HCT116 (cell line): ENCODE measurements at regions of chr5 and their contacts with region 1.

Region 1: DNA sequence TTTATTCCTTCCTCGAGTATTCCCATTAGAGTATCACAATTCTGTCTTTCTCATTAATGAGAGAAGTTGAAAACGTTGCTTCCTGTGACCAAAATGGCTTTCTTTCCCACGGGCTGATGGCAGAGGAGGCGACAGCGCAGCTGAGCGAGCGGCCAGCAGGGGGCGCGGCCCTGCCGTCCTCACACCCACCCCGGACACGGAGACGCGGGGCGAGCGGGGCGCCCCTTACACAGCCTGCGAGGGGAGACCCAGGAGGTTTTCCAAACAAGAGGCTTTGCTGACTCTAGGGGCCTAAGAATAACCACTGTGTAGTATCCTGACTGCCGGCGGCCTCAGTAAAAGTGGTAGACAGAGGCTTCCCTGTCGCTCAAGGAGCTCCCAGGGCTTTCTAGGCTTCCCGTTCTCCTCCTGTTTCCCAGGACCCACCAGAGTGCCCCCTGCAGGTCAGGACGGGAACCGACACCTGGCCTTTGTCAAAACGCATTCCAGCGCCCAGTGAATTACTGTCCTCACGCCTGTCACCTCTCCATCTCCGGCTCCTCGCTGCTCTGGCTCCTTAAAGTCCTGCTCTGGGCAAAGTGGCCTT is 27.3 kb upstream of the FGF1 start:
- DNase-seq: peak; percentile 80
- ATAC-seq: peak; percentile 83
- H3K4me3 ChIP-seq: peak overlapping the region; percentile 46 to 57
- H3K27ac ChIP-seq: peak overlapping the region; percentile 44
- H3K4me1 ChIP-seq: peaks cover 2 to 21% of the 10 kb centered on the region in 2 experiments; a peak in 3 of 4 replicates
- H3K27me3 ChIP-seq: no peaks in the 10 kb centered on the region
- CTCF ChIP-seq: peak; percentile 84 to 99 (median 96)
- POLR2A ChIP-seq: no peak
- RAD21 ChIP-seq: peak; percentile 73

Region 2: GRCh38 chr5:142611154-142611553 is 102.1 kb before region 1 on chr5:
- CTCF ChIA-PET with region 1: interaction called, 6 read pairs
- POLR2A ChIA-PET with region 1: no interaction called
- RAD21 ChIA-PET with region 1: no interaction called
- intact Hi-C with region 1: loop called (anchors 1 kb)
- DNase-seq: peak; percentile 60
- ATAC-seq: peak; percentile 97
- H3K4me3 ChIP-seq: no peak overlapping the region
- H3K27ac ChIP-seq: no peak overlapping the region
- H3K4me1 ChIP-seq: no peaks in the 10 kb centered on the region
- H3K27me3 ChIP-seq: no peaks in the 10 kb centered on the region
- CTCF ChIP-seq: peak; percentile 65 to 91 (median 85)
- POLR2A ChIP-seq: no peak
- RAD21 ChIP-seq: peak; percentile 95

Region 3: GRCh38 chr5:142655339-142656267 is 57.6 kb before region 1 on chr5:
- CTCF ChIA-PET with region 1: interaction called, 35 read pairs
- POLR2A ChIA-PET with region 1: no interaction called
- RAD21 ChIA-PET with region 1: interaction called, 4 to 5 read pairs
- intact Hi-C with region 1: no loop called
- DNase-seq: peak; percentile 33
- ATAC-seq: peak; percentile 98
- H3K4me3 ChIP-seq: no peak overlapping the region
- H3K27ac ChIP-seq: no peak overlapping the region
- H3K4me1 ChIP-seq: peaks cover 0 to 3% of the 10 kb centered on the region in 2 experiments; a peak in 1 of 4 replicates
- H3K27me3 ChIP-seq: no peaks in the 10 kb centered on the region
- CTCF ChIP-seq: peak; percentile 96 to 99 (median 96)
- POLR2A ChIP-seq: no peak
- RAD21 ChIP-seq: peak; percentile 99

Region 4: DNA sequence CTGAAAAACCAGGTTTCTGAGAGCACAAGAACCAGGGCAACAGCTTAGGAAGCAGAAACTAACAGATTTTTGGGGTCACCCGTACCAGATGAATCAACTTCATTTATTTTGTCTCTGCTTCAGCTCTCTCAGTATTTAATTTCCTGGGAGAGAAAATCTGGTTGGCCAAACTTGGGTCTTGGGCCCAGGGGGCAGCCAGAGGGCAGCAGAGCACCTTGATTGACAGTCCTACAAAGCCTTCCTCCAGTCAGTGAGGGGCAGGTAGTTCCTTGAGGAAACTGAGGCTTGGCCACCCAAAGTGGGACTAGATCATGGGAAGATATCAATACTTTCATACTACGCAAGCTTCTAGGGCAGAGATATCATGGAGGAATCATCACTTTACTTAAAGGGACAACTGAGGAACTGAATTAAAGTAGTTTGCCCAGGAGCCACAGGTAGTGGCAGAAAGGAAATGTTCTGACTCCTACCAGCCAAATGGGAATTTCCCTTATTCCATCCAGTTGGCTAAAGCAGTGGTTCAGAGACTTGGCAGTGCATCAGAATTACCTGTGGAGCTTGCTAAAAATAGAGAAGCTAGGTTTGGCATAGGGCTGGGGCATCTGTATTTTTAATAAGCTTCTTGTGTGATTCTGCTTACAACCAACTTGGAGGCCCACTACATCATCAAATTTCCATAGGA is 35.5 kb after region 1 on chr5:
- CTCF ChIA-PET with region 1: interaction called, 15 read pairs
- POLR2A ChIA-PET with region 1: no interaction called
- RAD21 ChIA-PET with region 1: interaction called in 1 of 2 experiments, 3 read pairs
- intact Hi-C with region 1: no loop called
- DNase-seq: no peak
- ATAC-seq: peak; percentile 92
- H3K4me3 ChIP-seq: no peak overlapping the region
- H3K27ac ChIP-seq: no peak overlapping the region
- H3K4me1 ChIP-seq: peaks cover 3 to 12% of the 10 kb centered on the region in 2 experiments; a peak in 3 of 4 replicates
- H3K27me3 ChIP-seq: no peaks in the 10 kb centered on the region
- CTCF ChIP-seq: peak; percentile 70 to 95 (median 85)
- POLR2A ChIP-seq: no peak
- RAD21 ChIP-seq: peak; percentile 98

Region 5: GRCh38 chr5:142881076-142881783 is 168.0 kb after region 1 on chr5:
- CTCF ChIA-PET with region 1: interaction called, 31 read pairs
- POLR2A ChIA-PET with region 1: no interaction called
- RAD21 ChIA-PET with region 1: interaction called in 1 of 2 experiments, 3 read pairs
- intact Hi-C with region 1: loop called (anchors 1 kb)
- DNase-seq: no peak
- ATAC-seq: 0 out of 2 replicates have a peak, but pooled peaks have one; percentile 26
- H3K4me3 ChIP-seq: no peak overlapping the region
- H3K27ac ChIP-seq: no peak overlapping the region
- H3K4me1 ChIP-seq: peaks cover 12 to 14% of the 10 kb centered on the region in 2 experiments; a peak in 3 of 4 replicates
- H3K27me3 ChIP-seq: no peaks in the 10 kb centered on the region
- CTCF ChIP-seq: no peak
- POLR2A ChIP-seq: no peak
- RAD21 ChIP-seq: no peak

Region 6: GRCh38 chr5:142915813-142916424 is 202.7 kb after region 1 on chr5:
- CTCF ChIA-PET with region 1: interaction called, 17 read pairs
- POLR2A ChIA-PET with region 1: no interaction called
- RAD21 ChIA-PET with region 1: interaction called in 1 of 2 experiments, 3 read pairs
- intact Hi-C with region 1: no loop called
- DNase-seq: no peak
- ATAC-seq: peak; percentile 87
- H3K4me3 ChIP-seq: no peak overlapping the region
- H3K27ac ChIP-seq: no peak overlapping the region
- H3K4me1 ChIP-seq: peaks cover 15% of the 10 kb centered on the region in 2 experiments; a peak in 3 of 4 replicates
- H3K27me3 ChIP-seq: no peaks in the 10 kb centered on the region
- CTCF ChIP-seq: peak; percentile 73 to 84 (median 75); a peak in 5 of 6 replicates
- POLR2A ChIP-seq: no peak
- RAD21 ChIP-seq: peak; percentile 75